Activated T-helper 1 cell treated with anti-CD3 and anti-CD28 coated beads, Interleukin-12 subunit alpha, Interleukin-12 subunit beta, Interleukin-2, Interleukin-4 antibody, amounts not matched to agents 30 ng/mL and 10 ng/mL and 1 ng/mL, durations not matched to agents 14 hours and 24 hours and 36 hours (primary cell): ENCODE measurements at regions of chr15 and their contacts with region 1.

Region 1: DNA sequence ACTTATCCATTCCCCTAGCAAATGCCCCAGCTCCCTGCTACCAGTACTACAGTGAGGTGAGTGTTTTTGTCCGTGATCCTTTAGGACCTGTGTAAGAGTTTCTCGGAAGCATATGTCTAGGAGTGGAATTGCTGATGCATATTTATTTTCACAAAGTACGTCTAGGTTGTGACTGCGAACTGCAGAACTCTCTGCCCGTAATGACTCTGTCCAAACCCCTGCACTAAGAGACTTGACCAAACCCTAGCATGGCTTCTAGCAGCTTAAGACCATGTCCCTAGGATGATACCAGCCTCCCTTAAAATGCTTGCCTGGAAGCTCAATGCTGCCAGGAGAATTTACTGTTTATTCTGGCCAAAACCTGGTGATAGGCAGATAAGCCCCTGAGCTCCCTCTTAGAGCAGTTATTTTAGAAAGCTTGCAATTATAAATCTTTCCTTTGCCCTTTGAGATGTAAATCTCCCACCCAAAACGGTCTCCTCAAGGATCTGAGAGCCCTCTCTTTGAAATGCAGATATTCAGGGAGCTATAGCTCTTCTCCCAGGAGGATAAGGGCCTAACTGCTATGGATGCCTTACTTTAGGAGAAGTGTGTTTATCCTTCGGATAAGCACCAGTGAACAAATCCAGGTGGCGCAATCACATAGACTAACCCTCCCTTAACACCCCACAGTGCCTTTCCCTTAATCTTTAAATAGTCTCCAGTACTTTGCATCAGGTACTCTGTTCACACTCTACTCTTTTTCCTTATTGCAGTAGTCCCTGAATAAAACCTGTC is 14.7 kb upstream of the CA12 start:
- DNase-seq: no peak
- H3K4me3 Mint-ChIP-seq: no peak overlapping the region
- H3K27ac Mint-ChIP-seq: no peak overlapping the region
- H3K4me1 Mint-ChIP-seq: peaks cover 29% of the 10 kb centered on the region
- H3K27me3 Mint-ChIP-seq: peaks cover 12% of the 10 kb centered on the region

Region 2: GRCh38 chr15:62190675-62191074 is 1205.7 kb before region 1 on chr15:
- intact Hi-C with region 1: no loop called
- DNase-seq: no peak
- H3K4me3 Mint-ChIP-seq: no peak overlapping the region
- H3K27ac Mint-ChIP-seq: no peak overlapping the region
- H3K4me1 Mint-ChIP-seq: no peaks in the 10 kb centered on the region
- H3K27me3 Mint-ChIP-seq: peaks cover 17% of the 10 kb centered on the region

Region 3: GRCh38 chr15:63277038-63277892 is 119.1 kb before region 1 on chr15 and contains the start of gene APH1B:
- intact Hi-C with region 1: no loop called
- DNase-seq: peak; percentile 80
- H3K4me3 Mint-ChIP-seq: peak within 1 kb of the TSS; percentile 89
- H3K27ac Mint-ChIP-seq: peak within 1 kb of the TSS; percentile 92
- H3K4me1 Mint-ChIP-seq: peaks cover 37% of the 10 kb centered on the region
- H3K27me3 Mint-ChIP-seq: no peaks in the 10 kb centered on the region
- total RNA-seq, gene APH1B: 4.1 and 6.2 TPM in 2 replicates

Region 4: GRCh38 chr15:63381301-63382204 is 14.8 kb before region 1 on chr15 and contains the start of gene CA12:
- intact Hi-C with region 1: loop called (anchors 2 kb)
- DNase-seq: no peak
- H3K4me3 Mint-ChIP-seq: peak within 1 kb of the TSS; percentile 69
- H3K27ac Mint-ChIP-seq: no peak within 1 kb of the TSS
- H3K4me1 Mint-ChIP-seq: peaks cover 25% of the 10 kb centered on the region
- H3K27me3 Mint-ChIP-seq: peaks cover 48% of the 10 kb centered on the region
- total RNA-seq, gene CA12: 0.29 and 0.36 TPM in 2 replicates